Esophagus muscularis mucosa (tissue), 4 donors: ENCODE measurements at regions of chr14 and their contacts with region 1.

Region 1: DNA sequence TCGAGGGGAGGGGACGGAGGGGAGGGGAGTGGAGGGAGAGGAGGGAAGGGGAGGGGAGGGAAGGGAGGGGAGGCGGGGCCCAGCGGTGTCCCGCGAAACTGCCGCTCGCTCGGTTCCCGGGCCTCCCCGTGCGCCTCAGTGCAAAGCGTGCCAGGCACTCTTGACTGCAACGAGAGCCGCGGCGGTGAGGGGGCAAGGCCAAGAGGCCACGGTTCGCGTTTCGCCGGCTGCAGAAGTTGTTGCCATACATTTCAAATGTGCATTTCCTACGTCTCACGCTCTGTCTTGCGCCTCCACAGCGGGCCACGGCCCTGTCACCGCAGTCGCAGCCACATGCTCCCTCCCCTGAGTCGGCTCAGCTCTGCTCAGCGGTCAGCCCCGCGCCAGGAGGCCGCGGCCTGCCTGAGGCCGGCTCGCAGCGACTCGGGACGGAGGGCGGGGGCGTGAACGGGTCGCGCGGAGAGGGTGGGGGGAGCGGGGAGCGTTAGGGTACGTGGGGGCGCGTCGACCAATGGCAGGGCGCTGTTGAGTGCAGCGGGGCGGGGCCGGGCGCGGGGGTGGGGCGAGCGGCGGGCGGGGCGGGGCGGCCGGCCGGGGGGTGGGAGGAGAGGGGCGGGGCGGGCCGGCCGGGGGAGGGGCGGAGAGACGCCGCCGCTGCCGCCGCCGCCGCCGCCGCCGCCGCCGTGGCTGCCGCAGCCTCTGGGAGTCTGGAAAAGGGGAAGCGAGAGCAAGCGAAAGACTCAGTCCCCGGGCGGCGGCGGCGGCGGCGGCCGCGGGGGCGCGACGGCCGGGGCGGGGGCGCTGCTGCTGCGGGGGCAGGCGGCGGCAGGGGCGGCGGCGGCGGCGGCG is at the start of gene PPP2R5C:
- DNase-seq: peak; percentile 95
- H3K4me3 ChIP-seq: peak within 1 kb of the TSS; percentile 82 to 99 (median 92)
- H3K27ac ChIP-seq: peak within 1 kb of the TSS; percentile 81 to 99 (median 96)
- H3K4me1 ChIP-seq: peaks cover 18 to 46% (median 35%) of the 10 kb centered on the region in 4 donors
- H3K27me3 ChIP-seq: no peaks in the 10 kb centered on the region
- CTCF ChIP-seq: no peak
- EP300 ChIP-seq: no peak
- POLR2A ChIP-seq: peak; percentile 65
- total RNA-seq, gene PPP2R5C: 103 to 142 (median 131) TPM

Region 2: GRCh38 chr14:101707068-101707842 is 54.0 kb before region 1 on chr14:
- intact Hi-C with region 1: loop called (anchors 2 kb)
- DNase-seq: peak; percentile 93
- H3K4me3 ChIP-seq: peak overlapping the region in 2 of 4 donors; percentile 1 to 31
- H3K27ac ChIP-seq: peak overlapping the region; percentile 66 to 76 (median 72)
- H3K4me1 ChIP-seq: peaks cover 20 to 27% (median 26%) of the 10 kb centered on the region in 4 donors
- H3K27me3 ChIP-seq: peaks cover 0 to 29% (median 4%) of the 10 kb centered on the region in 4 donors
- CTCF ChIP-seq: peak; percentile 78 to 86 (median 85)
- EP300 ChIP-seq: no peak
- POLR2A ChIP-seq: no peak

Region 3: DNA sequence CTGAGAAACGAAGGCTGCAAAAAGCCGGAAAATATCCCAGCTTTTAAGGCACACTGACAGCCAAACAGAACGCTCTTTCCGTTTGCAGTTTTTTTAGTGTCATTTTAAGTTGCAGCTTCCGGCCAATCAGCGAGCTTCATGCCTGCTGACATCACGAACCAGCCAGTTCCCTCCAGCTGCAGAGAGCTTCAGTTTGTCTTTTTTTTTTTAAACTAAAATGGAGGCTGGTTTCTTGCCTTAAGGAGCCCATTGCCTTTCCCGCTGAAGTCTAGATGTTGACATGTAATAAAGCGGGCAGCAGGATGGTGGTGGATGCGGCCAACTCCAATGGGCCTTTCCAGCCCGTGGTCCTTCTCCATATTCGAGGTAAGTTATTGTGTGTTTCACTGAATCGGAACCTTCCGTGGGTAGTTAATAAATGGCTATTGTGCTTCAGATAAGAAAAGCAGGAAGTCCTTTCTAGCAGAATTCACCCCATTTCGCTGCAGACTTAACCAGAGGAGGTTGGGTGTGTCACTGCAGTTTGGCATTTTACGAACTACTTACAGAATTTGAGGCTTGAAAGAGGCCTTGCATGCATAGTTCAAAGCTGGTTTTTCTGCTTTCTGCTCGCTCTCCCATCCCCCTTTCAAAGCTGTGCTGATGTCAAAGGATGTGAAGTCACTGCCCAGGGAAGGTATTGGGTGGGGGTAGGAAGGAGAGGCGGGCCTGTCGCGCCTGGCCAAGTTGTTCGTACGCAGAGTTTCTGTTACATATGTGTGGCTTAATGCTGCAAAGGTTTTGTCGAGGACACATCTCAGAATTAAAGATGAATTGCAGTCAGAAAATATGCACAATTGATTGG is 48.6 kb after region 1 on chr14:
- intact Hi-C with region 1: loop called (anchors 5 kb)
- DNase-seq: peak; percentile 97
- H3K4me3 ChIP-seq: peak overlapping the region; percentile 55 to 71 (median 65)
- H3K27ac ChIP-seq: peak overlapping the region; percentile 92 to 99 (median 94)
- H3K4me1 ChIP-seq: peaks cover 43 to 57% (median 49%) of the 10 kb centered on the region in 4 donors
- H3K27me3 ChIP-seq: no peaks in the 10 kb centered on the region
- CTCF ChIP-seq: no peak
- EP300 ChIP-seq: no peak
- POLR2A ChIP-seq: peak; percentile 47

Region 4: GRCh38 chr14:101843665-101844064 is 82.4 kb after region 1 on chr14:
- intact Hi-C with region 1: loop called (anchors 5 kb)
- DNase-seq: no peak
- H3K4me3 ChIP-seq: no peak overlapping the region
- H3K27ac ChIP-seq: no peak overlapping the region
- H3K4me1 ChIP-seq: peaks cover 4 to 59% (median 28%) of the 10 kb centered on the region in 4 donors
- H3K27me3 ChIP-seq: no peaks in the 10 kb centered on the region
- CTCF ChIP-seq: peak; percentile 22 to 36 (median 30)
- EP300 ChIP-seq: no peak
- POLR2A ChIP-seq: no peak

Region 5: DNA sequence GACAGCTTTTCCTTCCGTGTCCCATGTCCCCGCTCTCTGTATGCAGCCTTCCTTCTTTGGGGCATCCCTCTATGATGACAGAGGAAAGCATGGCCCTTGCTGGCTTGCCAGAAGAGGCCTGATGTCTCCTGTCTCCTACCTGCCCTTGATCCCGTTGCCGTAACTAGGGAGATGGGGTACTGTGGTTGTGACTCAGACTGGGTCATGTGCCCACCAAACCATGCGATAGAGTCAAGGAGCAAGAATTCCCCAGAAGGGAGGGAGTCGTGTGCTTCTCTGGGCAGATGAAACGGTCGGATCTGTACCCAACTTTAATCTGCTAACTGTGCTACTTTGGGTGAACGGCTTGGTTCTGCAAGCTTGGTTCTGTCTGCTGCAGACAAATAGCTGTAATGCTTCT is 104.0 kb after region 1 on chr14:
- intact Hi-C with region 1: no loop called
- DNase-seq: no peak
- H3K4me3 ChIP-seq: no peak overlapping the region
- H3K27ac ChIP-seq: no peak overlapping the region
- H3K4me1 ChIP-seq: peaks cover under 1 to 24% (median 15%) of the 10 kb centered on the region in 4 donors
- H3K27me3 ChIP-seq: no peaks in the 10 kb centered on the region
- CTCF ChIP-seq: no peak
- EP300 ChIP-seq: no peak
- POLR2A ChIP-seq: no peak

Region 6: GRCh38 chr14:101947906-101948665 is 186.8 kb after region 1 on chr14:
- intact Hi-C with region 1: loop called (anchors 10 kb)
- DNase-seq: peak; percentile 100
- H3K4me3 ChIP-seq: peak overlapping the region; percentile 62 to 87 (median 82)
- H3K27ac ChIP-seq: peak overlapping the region; percentile 97 to 99 (median 98)
- H3K4me1 ChIP-seq: peaks cover 17 to 28% (median 24%) of the 10 kb centered on the region in 4 donors
- H3K27me3 ChIP-seq: peaks cover 0 to 25% (median 0%) of the 10 kb centered on the region in 4 donors
- CTCF ChIP-seq: peak in 1 of 3 experiments; percentile 26
- EP300 ChIP-seq: peak; percentile 61
- POLR2A ChIP-seq: peak; percentile 90